ENCODE measurements at regions of chrX and their contacts with region 1.

Region 1: GRCh38 chrX:124383354-124383753 is 37.0 kb downstream of the SH2D1A start:
- DNase-seq: no peak
- ATAC-seq: no peak
- H3K4me3 ChIP-seq: no peak overlapping the region
- H3K4me3 Mint-ChIP-seq: peak overlapping the region; percentile 51
- H3K27ac ChIP-seq: no peak overlapping the region
- H3K27ac Mint-ChIP-seq: peak overlapping the region; percentile 58
- H3K4me1 ChIP-seq: no peaks in the 10 kb centered on the region
- H3K4me1 Mint-ChIP-seq: peaks cover 51% of the 10 kb centered on the region
- H3K27me3 ChIP-seq: no peaks in the 10 kb centered on the region
- H3K27me3 Mint-ChIP-seq: no peaks in the 10 kb centered on the region
- CTCF ChIP-seq: no peak

Region 2: GRCh38 chrX:124211312-124211942 is 171.9 kb before region 1 on chrX:
- CTCF ChIA-PET with region 1: no interaction called
- POLR2A ChIA-PET with region 1: no interaction called
- intact Hi-C with region 1: loop called in 1 of 2 experiments (anchors 5 kb)
- DNase-seq: peak in 4 of 14 experiments; percentile 34 to 70 (median 66)
- ATAC-seq: peak; percentile 65
- H3K4me3 ChIP-seq: no peak overlapping the region
- H3K4me3 Mint-ChIP-seq: peak overlapping the region; percentile 35
- H3K27ac ChIP-seq: no peak overlapping the region
- H3K27ac Mint-ChIP-seq: peak overlapping the region; percentile 71
- H3K4me1 ChIP-seq: peaks cover 26% of the 10 kb centered on the region
- H3K4me1 Mint-ChIP-seq: peaks cover 43% of the 10 kb centered on the region
- H3K27me3 ChIP-seq: no peaks in the 10 kb centered on the region
- H3K27me3 Mint-ChIP-seq: no peaks in the 10 kb centered on the region
- CTCF ChIP-seq: peak; percentile 69

Region 3: DNA sequence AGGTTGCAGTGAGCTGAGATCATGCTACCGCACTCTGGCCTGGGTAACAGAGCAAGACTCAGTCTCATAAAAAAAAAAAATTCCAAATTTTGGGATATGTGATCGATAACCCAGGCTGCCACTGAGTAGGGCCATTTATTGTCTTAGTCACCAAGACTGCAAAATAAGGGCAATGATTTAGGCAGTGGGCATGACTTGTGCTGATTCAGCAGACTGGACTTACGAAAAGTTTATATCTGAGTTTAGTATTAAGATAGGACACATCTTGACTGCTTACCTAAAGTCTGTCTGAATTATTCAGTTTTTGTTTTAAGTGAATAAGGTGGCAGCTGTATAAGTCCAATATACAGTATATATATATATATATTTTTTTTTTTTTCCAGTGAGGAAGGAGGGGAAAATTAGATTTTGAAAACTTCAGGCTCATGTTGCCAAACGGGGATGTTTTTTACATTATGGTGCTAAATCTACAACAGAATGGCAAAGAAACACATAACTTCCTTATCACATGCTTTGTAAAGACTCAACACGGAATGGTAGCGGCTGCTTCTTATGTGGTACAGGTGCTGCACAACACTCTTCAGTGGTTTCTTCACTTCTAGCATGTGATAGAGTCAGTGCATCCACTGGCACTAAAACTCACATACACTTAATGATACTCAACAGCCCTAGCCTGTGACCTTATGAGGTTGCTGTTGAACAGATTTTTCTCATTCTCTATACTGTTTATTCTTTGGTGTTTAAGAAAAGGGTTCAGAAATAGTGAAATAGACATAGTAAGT is 44.4 kb before region 1 on chrX:
- CTCF ChIA-PET with region 1: no interaction called
- POLR2A ChIA-PET with region 1: no interaction called
- intact Hi-C with region 1: loop called in 1 of 2 experiments (anchors 5 kb)
- DNase-seq: peak in 8 of 14 experiments; percentile 4 to 80 (median 38)
- ATAC-seq: peak; percentile 75
- H3K4me3 ChIP-seq: no peak overlapping the region
- H3K4me3 Mint-ChIP-seq: peak overlapping the region; percentile 25
- H3K27ac ChIP-seq: no peak overlapping the region
- H3K27ac Mint-ChIP-seq: peak overlapping the region; percentile 87
- H3K4me1 ChIP-seq: peaks cover 22% of the 10 kb centered on the region
- H3K4me1 Mint-ChIP-seq: peaks cover 51% of the 10 kb centered on the region
- H3K27me3 ChIP-seq: no peaks in the 10 kb centered on the region
- H3K27me3 Mint-ChIP-seq: no peaks in the 10 kb centered on the region
- CTCF ChIP-seq: no peak

Region 4: GRCh38 chrX:124940531-124940930 is 557.2 kb after region 1 on chrX:
- CTCF ChIA-PET with region 1: no interaction called
- POLR2A ChIA-PET with region 1: no interaction called
- intact Hi-C with region 1: no loop called
- DNase-seq: no peak
- ATAC-seq: no peak
- H3K4me3 ChIP-seq: no peak overlapping the region
- H3K4me3 Mint-ChIP-seq: no peak overlapping the region
- H3K27ac ChIP-seq: no peak overlapping the region
- H3K27ac Mint-ChIP-seq: no peak overlapping the region
- H3K4me1 ChIP-seq: no peaks in the 10 kb centered on the region
- H3K4me1 Mint-ChIP-seq: no peaks in the 10 kb centered on the region
- H3K27me3 ChIP-seq: no peaks in the 10 kb centered on the region
- H3K27me3 Mint-ChIP-seq: no peaks in the 10 kb centered on the region
- CTCF ChIP-seq: no peak